HepG2 (cell line): ENCODE measurements at regions of chr10 and their contacts with region 1.

Region 1: DNA sequence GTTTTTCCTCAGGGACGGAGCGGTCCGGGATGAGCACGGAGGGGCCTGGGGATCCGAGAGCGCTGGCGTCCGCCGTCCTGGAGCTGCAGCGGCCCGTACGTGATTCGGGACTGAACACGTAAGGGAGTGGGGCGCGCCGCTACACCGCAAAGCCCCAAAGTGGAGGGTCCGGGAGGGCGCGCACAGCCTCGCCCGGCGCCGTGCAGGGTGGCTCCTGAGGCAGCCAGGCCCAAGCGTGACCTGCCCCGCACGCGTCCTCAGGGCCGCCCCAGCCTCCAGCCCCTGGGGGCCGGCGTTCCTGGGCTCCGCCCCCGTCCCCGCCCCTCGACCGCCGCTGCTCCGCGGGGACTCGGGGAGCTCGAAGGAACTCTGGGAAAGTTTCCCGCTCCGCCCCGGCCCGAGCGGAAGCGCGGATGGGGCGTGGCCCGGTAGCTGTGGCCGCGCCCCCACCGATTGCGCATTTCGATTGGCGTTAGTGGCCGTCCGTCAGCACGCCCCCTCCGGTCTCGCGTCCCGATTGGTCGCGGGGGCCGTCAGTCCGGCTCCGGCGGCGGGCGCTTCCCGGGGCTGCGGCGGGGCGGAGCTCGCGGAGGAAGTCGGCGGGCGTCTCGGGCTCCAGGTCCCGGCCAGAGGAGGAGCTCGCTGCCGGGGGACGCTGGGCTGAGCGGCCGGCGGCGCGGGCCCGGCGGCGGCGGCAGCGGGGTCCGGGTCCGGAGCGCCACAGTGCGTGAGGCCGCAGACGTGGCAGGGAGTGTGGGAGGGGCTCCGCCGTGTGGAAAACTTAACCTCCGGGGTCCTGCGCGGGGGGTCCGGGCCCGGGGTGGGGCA is at the starts of genes ANKRD16 and FBH1:
- DNase-seq: peak; percentile 93
- ATAC-seq: peak; percentile 91
- H3K4me3 ChIP-seq: peak within 1 kb of the TSS; percentile 79 to 94 (median 85)
- H3K27ac ChIP-seq: peak within 1 kb of the TSS; percentile 84
- H3K4me1 ChIP-seq: peaks cover 55% of the 10 kb centered on the region
- H3K27me3 ChIP-seq: no peaks in the 10 kb centered on the region; a peak in 1 of 5 replicates
- CTCF ChIP-seq: no peak
- EP300 ChIP-seq: no peak
- POLR2A ChIP-seq: peak; percentile 90 to 97
- RAD21 ChIP-seq: peak; percentile 59; the same call in 1 of the 2 replicates
- total RNA-seq, gene ANKRD16: 5.4 and 8.0 TPM in 2 replicates
- total RNA-seq, gene FBH1: 53.3 and 60.3 TPM in 2 replicates

Region 2: GRCh38 chr10:5243521-5243987 is 646.3 kb before region 1 on chr10:
- CTCF ChIA-PET with region 1: no interaction called
- POLR2A ChIA-PET with region 1: no interaction called
- in situ Hi-C with region 1: no loop called
- intact Hi-C with region 1: no loop called
- DNase-seq: peak; percentile 93
- ATAC-seq: peak; percentile 97
- H3K4me3 ChIP-seq: no peak overlapping the region
- H3K27ac ChIP-seq: peak overlapping the region; percentile 82
- H3K4me1 ChIP-seq: peaks cover 33% of the 10 kb centered on the region
- H3K27me3 ChIP-seq: no peaks in the 10 kb centered on the region
- CTCF ChIP-seq: no peak
- EP300 ChIP-seq: peak; percentile 23 to 98; a peak in 3 of 4 replicates
- POLR2A ChIP-seq: no peak
- RAD21 ChIP-seq: no peak

Region 3: GRCh38 chr10:5684318-5684970 is 205.4 kb before region 1 on chr10 and contains the start of gene TASOR2:
- CTCF ChIA-PET with region 1: no interaction called
- POLR2A ChIA-PET with region 1: interaction called, 11 read pairs
- in situ Hi-C with region 1: no loop called
- intact Hi-C with region 1: loop called (anchors 5 kb)
- DNase-seq: peak; percentile 95
- ATAC-seq: peak; percentile 91
- H3K4me3 ChIP-seq: peak within 1 kb of the TSS; percentile 86 to 94 (median 89)
- H3K27ac ChIP-seq: peak within 1 kb of the TSS; percentile 86
- H3K4me1 ChIP-seq: peaks cover 63% of the 10 kb centered on the region
- H3K27me3 ChIP-seq: peaks cover 0 to 1% of the 10 kb centered on the region in 2 experiments; a peak in 3 of 5 replicates
- CTCF ChIP-seq: peak; percentile 31; the same call in 1 of the 2 replicates
- EP300 ChIP-seq: 0 out of 4 replicates have a peak, but pooled peaks of 1 of the 2 experiments have one; percentile 20
- POLR2A ChIP-seq: peak; percentile 31 to 72; a peak in 3 of 4 replicates
- RAD21 ChIP-seq: no peak
- total RNA-seq, gene TASOR2: 55.3 and 58.9 TPM in 2 replicates

Region 4: GRCh38 chr10:5692461-5693358 is 197.1 kb before region 1 on chr10:
- CTCF ChIA-PET with region 1: no interaction called
- POLR2A ChIA-PET with region 1: interaction called, 10 read pairs
- in situ Hi-C with region 1: no loop called
- intact Hi-C with region 1: no loop called
- DNase-seq: peak; percentile 82
- ATAC-seq: peak; percentile 95
- H3K4me3 ChIP-seq: peak overlapping the region; percentile 67 to 88 (median 76)
- H3K27ac ChIP-seq: peak overlapping the region; percentile 93
- H3K4me1 ChIP-seq: peaks cover 64% of the 10 kb centered on the region
- H3K27me3 ChIP-seq: no peaks in the 10 kb centered on the region
- CTCF ChIP-seq: peak; percentile 24
- EP300 ChIP-seq: peak; percentile 11 to 26; a peak in 1 of 4 replicates
- POLR2A ChIP-seq: peak; percentile 50 to 73
- RAD21 ChIP-seq: peak; percentile 34; the same call in 1 of the 2 replicates

Region 5: DNA sequence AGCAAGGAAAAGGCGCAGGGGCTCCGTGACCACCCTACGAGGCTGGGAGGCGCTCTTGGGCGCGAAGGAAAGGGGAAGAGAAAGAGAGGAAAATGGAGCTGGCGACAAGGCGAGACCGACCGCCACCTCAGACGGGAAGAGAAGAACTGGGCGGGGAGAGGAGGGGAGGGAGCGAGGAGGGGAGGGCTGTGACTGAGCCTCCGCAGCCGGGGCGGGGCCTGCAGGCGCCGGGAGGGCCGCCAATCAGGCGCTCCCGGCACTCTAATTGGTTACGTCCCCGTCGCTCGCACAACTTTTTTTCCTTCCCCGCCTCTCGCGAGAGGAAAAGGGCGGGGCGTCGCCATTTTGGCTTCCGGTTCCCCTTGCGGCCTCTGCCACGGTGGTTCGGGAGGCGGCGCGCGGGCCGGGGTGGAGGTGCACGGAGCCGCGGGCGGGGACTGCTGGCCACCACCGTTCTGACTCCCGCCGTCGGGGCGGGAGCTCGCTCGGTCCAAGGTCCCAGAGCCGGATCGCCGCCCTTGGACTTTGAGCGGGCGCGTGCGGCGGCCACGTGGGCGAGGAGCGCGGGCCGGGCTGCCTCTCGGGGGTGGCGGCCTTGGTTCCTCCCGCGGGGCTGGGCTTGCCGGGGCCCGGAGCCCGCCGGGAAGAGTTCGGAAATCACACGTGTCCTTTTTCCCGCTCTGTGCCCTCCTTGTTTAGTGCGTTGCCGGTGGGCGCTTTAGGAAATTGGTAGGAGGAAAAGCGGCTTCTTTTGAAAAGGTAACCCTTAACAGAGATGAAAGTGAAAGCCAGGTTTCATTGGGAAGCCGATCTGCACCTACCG is 76.3 kb before region 1 on chr10 and contains the start of gene GDI2:
- CTCF ChIA-PET with region 1: no interaction called
- POLR2A ChIA-PET with region 1: interaction called, 28 read pairs
- in situ Hi-C with region 1: no loop called
- intact Hi-C with region 1: loop called (anchors 5 kb)
- DNase-seq: peak; percentile 94
- ATAC-seq: peak; percentile 90
- H3K4me3 ChIP-seq: peak within 1 kb of the TSS; percentile 89 to 100 (median 97)
- H3K27ac ChIP-seq: peak within 1 kb of the TSS; percentile 100
- H3K4me1 ChIP-seq: peaks cover 63% of the 10 kb centered on the region
- H3K27me3 ChIP-seq: peaks cover 0 to 3% of the 10 kb centered on the region in 2 experiments; a peak in 1 of 5 replicates
- CTCF ChIP-seq: no peak
- EP300 ChIP-seq: peak in 1 of 2 experiments; percentile 72; a peak in 3 of 4 replicates
- POLR2A ChIP-seq: peak; percentile 93 to 95
- RAD21 ChIP-seq: peak; percentile 58
- total RNA-seq, gene GDI2: 477 and 756 TPM in 2 replicates

Region 6: GRCh38 chr10:5873515-5873995 is 16.3 kb before region 1 on chr10:
- CTCF ChIA-PET with region 1: no interaction called
- POLR2A ChIA-PET with region 1: interaction called, 12 read pairs
- in situ Hi-C with region 1: no loop called
- intact Hi-C with region 1: no loop called
- DNase-seq: peak; percentile 57
- ATAC-seq: peak; percentile 83
- H3K4me3 ChIP-seq: no peak overlapping the region
- H3K27ac ChIP-seq: no peak overlapping the region
- H3K4me1 ChIP-seq: no peaks in the 10 kb centered on the region
- H3K27me3 ChIP-seq: no peaks in the 10 kb centered on the region
- CTCF ChIP-seq: peak; percentile 63
- EP300 ChIP-seq: no peak
- POLR2A ChIP-seq: no peak
- RAD21 ChIP-seq: peak; percentile 37; the same call in 1 of the 2 replicates